Heart left ventricle (tissue), 16 donors: ENCODE measurements at regions of chr14 and their contacts with region 1.

Region 1: GRCh38 chr14:93543766-93544165 is 113.0 kb downstream of the UNC79 start:
- DNase-seq: no peak
- ATAC-seq: no peak
- H3K4me3 ChIP-seq: no peak overlapping the region
- H3K27ac ChIP-seq: no peak overlapping the region
- H3K4me1 ChIP-seq: peaks cover 0 to 4% (median 0%) of the 10 kb centered on the region in 12 donors
- H3K27me3 ChIP-seq: peaks cover 0 to 4% (median 0%) of the 10 kb centered on the region in 9 donors
- CTCF ChIP-seq: peak in 9 of 12 donors; percentile 6 to 53 (median 19)
- POLR2A ChIP-seq: no peak

Region 2: DNA sequence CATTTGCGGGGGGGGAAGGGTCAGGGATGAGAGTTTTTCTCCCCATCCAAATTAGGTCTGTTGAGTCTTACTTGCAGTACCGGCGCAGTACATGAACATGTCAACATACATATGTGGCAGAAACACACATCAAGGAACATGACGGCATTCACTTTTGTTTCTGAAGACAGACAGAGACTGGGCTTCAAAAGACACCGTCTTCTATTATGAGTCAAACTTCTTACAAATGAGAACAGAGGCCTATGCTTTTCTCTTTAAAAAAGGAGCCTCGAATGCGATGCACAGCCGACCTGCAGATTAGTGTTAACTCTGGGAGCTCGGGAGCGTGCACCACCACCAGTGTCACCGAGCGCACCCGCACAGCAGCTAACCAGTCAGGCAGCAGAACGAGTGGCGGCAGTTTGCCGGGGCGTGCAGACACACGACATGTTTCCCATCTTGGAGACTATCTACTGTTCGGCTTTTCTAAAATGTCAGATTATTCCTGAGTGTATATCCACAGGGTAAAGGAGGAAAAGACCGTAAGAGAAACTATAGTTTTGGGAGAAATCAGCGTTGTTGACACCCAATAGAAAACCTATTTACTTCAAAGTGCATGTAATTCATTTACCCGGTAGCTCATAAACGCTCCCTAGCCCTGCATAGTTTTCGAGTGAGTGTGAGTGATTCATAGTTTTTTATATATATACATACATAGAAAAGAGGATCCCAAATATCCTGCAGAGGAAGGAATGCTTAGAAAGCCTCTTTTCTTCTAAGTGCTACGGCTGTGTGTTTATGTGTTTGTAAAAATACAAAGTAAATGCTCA is 303.7 kb before region 1 on chr14:
- intact Hi-C with region 1: loop called in 1 of 10 experiments (anchors 10 kb)
- DNase-seq: no peak
- ATAC-seq: no peak
- H3K4me3 ChIP-seq: no peak overlapping the region
- H3K27ac ChIP-seq: no peak overlapping the region
- H3K4me1 ChIP-seq: no peaks in the 10 kb centered on the region
- H3K27me3 ChIP-seq: no peaks in the 10 kb centered on the region
- CTCF ChIP-seq: no peak
- POLR2A ChIP-seq: no peak